Dendritic cell treated with granulocyte-macrophage colony-stimulating factor and Interleukin-4, amounts not matched to agents 40 ng/mL and 50 ng/mL, for 4 days (primary cell): ENCODE measurements at regions of chr11 and their contacts with region 1.

Region 1: DNA sequence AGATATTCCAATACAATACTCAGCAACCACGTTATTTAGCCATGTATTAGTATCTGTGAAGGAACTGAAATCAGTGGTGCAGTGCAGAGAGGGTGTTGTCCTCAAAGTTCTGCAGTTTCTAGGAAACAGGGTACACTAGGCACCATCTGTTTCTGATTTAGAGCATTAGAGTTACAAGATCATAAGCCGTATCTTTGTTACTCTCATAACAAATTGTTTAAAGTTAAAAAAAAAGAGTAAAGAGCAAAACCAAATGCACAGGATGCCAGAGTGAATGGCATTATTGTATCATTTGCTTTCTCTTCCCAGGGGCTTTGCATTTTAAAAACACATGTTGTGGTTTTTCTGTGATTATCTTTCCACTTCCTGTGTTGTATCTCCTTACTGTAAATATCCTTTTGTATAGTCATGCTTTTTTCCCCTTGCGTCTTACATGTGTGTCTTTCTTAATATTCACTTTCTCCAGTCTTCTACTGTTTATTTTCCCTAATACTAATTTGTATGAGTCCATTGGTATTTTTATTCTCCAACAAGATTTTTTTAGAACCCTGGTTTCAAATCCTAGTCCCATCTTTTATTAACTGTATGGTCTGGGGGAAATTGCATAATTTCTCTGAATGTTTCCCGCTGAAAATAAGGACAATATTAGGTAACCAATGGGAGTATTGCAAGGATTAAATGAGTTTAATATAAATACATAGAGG is 15.2 kb upstream of the NUP160 start:
- H3K4me3 Mint-ChIP-seq: peak overlapping the region; percentile 53
- H3K27ac Mint-ChIP-seq: peak overlapping the region; percentile 93
- H3K4me1 Mint-ChIP-seq: peaks cover 49% of the 10 kb centered on the region
- H3K27me3 Mint-ChIP-seq: no peaks in the 10 kb centered on the region

Region 2: GRCh38 chr11:47917643-47918369 is 54.5 kb after region 1 on chr11:
- intact Hi-C with region 1: loop called (anchors 5 kb)
- H3K4me3 Mint-ChIP-seq: peak overlapping the region; percentile 39
- H3K27ac Mint-ChIP-seq: peak overlapping the region; percentile 92
- H3K4me1 Mint-ChIP-seq: peaks cover 64% of the 10 kb centered on the region
- H3K27me3 Mint-ChIP-seq: no peaks in the 10 kb centered on the region

Region 3: DNA sequence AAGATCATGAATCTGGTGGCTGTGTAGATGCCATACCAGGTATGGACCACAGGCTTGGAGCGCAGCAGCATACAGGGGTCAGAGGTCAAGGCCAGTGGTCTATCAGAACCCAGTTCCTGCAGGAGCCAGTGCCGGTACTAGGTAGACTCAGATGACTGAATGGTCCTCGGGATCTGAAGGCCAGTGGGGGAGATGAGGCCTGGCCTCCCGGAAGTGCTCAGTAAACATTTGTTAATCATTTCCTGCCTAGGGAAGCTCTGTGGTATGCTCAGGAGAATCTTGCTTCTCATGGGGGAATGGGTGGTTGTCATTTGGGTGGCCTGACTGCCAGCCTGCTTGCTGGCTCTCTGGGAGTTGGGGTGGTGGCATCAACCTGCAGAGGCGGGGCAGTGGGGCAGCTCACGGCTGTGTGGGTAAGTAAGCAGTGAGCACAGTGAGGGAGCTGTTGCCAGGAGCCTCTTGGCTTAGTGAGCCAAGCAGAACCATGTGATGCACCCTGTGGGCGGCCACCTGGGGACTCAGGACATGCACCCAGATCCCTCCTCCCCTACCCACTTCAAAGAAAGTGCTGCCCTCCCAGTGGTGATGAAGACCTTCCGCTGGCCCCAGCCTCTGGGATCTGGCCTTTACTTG is 150.0 kb after region 1 on chr11:
- intact Hi-C with region 1: no loop called
- H3K4me3 Mint-ChIP-seq: no peak overlapping the region
- H3K27ac Mint-ChIP-seq: peak overlapping the region; percentile 59
- H3K4me1 Mint-ChIP-seq: peaks cover 91% of the 10 kb centered on the region
- H3K27me3 Mint-ChIP-seq: no peaks in the 10 kb centered on the region